PC-9 (cell line): ENCODE measurements at regions of chr3 and their contacts with region 1.

Region 1: DNA sequence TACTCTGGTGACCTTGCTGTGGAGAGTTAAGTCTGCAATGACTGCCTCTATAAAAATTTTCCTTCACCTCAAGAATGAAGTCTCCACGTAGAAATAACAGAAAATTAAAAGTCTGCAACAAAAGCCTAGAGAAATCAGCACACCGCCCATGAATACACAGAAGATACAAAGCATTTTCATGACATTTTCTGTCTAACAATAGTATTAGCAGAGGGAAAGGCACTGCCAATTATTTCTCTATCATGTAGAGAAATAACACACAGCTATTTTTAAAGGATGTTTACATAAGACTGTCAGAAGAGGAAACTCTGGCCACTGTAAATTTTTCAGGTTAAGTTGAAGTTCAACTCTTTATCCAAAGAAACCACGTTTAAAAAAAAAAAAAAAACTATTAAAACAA is 80.8 kb downstream of the GSK3B start:
- DNase-seq: no peak
- H3K4me3 ChIP-seq: no peak overlapping the region
- H3K27ac ChIP-seq: no peak overlapping the region
- H3K4me1 ChIP-seq: no peaks in the 10 kb centered on the region
- H3K27me3 ChIP-seq: no peaks in the 10 kb centered on the region
- CTCF ChIP-seq: no peak

Region 2: GRCh38 chr3:119098619-119099222 is 914.8 kb before region 1 on chr3:
- CTCF ChIA-PET with region 1: no interaction called
- POLR2A ChIA-PET with region 1: interaction called, 15 read pairs
- intact Hi-C with region 1: no loop called
- DNase-seq: peak in 1 of 2 experiments; percentile 14
- H3K4me3 ChIP-seq: no peak overlapping the region
- H3K27ac ChIP-seq: no peak overlapping the region
- H3K4me1 ChIP-seq: no peaks in the 10 kb centered on the region
- H3K27me3 ChIP-seq: no peaks in the 10 kb centered on the region
- CTCF ChIP-seq: peak; percentile 83

Region 3: GRCh38 chr3:120348981-120349818 is 335.7 kb after region 1 on chr3 and contains the start of gene LRRC58:
- CTCF ChIA-PET with region 1: no interaction called
- POLR2A ChIA-PET with region 1: no interaction called
- intact Hi-C with region 1: loop called (anchors 5 kb)
- DNase-seq: peak; percentile 77 to 95
- H3K4me3 ChIP-seq: peak within 1 kb of the TSS; percentile 82
- H3K27ac ChIP-seq: peak within 1 kb of the TSS; percentile 60
- H3K4me1 ChIP-seq: peaks cover 25% of the 10 kb centered on the region
- H3K27me3 ChIP-seq: no peaks in the 10 kb centered on the region
- CTCF ChIP-seq: no peak; the same call in 1 of the 2 replicates
- total RNA-seq, gene LRRC58: 22.2 and 28.9 TPM in 2 replicates